ENCODE measurements at regions of chr17 and their contacts with region 1.

Region 1: GRCh38 chr17:70181376-70181775 is 12.0 kb downstream of the KCNJ2 start:
- DNase-seq: no peak
- ATAC-seq: no peak
- H3K4me3 ChIP-seq: no peak overlapping the region
- H3K27ac ChIP-seq: no peak overlapping the region
- H3K4me1 ChIP-seq: no peaks in the 10 kb centered on the region
- H3K27me3 ChIP-seq: no peaks in the 10 kb centered on the region; a peak in 1 of 4 replicates
- CTCF ChIP-seq: no peak
- EP300 ChIP-seq: no peak
- POLR2A ChIP-seq: no peak
- RAD21 ChIP-seq: no peak

Region 2: GRCh38 chr17:70158180-70158579 is 23.2 kb before region 1 on chr17:
- CTCF ChIA-PET with region 1: no interaction called
- POLR2A ChIA-PET with region 1: no interaction called
- RAD21 ChIA-PET with region 1: no interaction called
- SMC1A ChIA-PET with region 1: no interaction called
- in situ Hi-C with region 1: no loop called
- intact Hi-C with region 1: no loop called
- DNase-seq: no peak
- ATAC-seq: no peak
- H3K4me3 ChIP-seq: no peak overlapping the region
- H3K27ac ChIP-seq: no peak overlapping the region
- H3K4me1 ChIP-seq: no peaks in the 10 kb centered on the region
- H3K27me3 ChIP-seq: no peaks in the 10 kb centered on the region
- CTCF ChIP-seq: no peak
- EP300 ChIP-seq: no peak
- POLR2A ChIP-seq: no peak
- RAD21 ChIP-seq: no peak

Region 3: DNA sequence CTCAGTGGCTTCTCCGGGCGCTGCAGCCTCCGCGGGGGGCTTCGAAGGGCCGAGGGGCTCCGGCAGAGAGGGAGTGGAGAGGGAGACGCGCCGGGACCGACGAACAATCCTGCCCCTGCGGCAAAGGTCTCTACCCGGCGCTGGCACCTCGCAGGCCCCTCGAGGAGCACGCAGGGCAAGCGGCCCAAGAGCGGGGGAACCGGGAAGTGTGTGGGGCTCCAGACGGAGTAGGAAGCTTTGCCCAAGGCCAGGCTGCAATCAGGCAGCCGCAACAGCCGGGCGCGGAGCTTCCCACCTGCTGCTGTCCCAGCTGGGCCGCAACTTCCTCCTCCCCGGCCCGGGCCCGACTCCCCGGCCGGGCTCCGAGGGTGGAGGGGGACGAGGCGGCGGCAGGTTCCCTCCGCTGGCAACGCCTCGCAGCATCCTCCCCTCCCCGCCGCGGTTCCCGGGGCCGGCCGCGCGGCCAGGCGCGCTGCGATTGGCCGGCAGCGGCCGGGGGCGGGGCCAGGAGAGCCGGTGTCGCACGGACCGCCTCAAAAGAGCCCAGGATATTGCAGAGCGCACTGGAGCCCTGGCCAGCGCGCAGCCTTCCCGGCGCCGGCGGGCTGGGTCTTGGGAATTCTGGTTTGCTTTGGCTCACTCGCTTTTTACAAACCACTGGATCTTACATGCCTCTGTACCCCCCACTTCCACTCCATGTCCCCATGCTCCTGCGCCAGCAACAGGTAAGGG is 12.2 kb before region 1 on chr17 and contains the start of gene KCNJ2:
- CTCF ChIA-PET with region 1: interaction called, 6 read pairs
- POLR2A ChIA-PET with region 1: interaction called, 8 read pairs
- RAD21 ChIA-PET with region 1: interaction called, 4 read pairs
- SMC1A ChIA-PET with region 1: interaction called, 17 read pairs
- in situ Hi-C with region 1: no loop called
- intact Hi-C with region 1: no loop called
- DNase-seq: no peak
- ATAC-seq: peak; percentile 95
- H3K4me3 ChIP-seq: peak within 1 kb of the TSS; percentile 38
- H3K27ac ChIP-seq: no peak within 1 kb of the TSS
- H3K4me1 ChIP-seq: peaks cover 8% of the 10 kb centered on the region
- H3K27me3 ChIP-seq: peaks cover 0 to 10% of the 10 kb centered on the region in 2 experiments; a peak in 1 of 4 replicates
- CTCF ChIP-seq: no peak
- EP300 ChIP-seq: no peak
- POLR2A ChIP-seq: no peak
- RAD21 ChIP-seq: no peak
- polyA plus RNA-seq, gene KCNJ2: 1.6 to 3.0 TPM

Measured in GM12878 (cell line).